Endothelial cell of umbilical vein (primary cell): ENCODE measurements at regions of chr7 and their contacts with region 1.

Region 1: DNA sequence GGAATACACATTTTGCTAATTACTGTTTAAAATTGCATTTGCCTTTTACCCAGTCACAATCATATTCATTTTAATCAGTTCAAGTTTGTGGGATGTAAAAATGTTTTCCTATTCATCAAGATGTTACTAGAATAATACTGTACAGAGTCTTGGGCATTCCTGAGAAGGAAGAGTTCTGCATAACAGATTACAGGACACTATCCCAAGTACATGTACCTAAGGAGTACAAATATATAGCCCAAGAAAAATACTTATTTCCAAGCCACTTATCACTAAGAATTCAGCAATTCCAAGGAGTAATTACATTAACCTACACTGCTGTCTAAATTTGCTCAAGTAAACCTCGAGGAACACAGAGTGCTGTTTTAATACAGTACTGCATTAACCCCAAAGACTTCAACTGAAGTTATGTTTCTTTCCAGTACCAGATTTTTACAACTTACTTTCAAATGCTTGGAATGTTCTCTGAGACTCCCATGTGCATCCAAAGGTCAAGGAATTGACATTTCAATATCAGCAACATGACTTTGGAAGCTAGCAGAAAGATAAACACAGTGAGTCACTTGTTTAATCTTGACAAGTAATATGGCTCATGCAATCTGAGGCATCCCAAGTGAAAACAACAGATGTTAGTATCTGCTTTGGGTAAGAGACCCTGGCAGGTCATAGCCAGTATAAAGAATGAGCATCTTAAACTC is 125.4 kb upstream of the BET1 start:
- DNase-seq: peak; percentile 84
- H3K4me3 ChIP-seq: no peak overlapping the region
- H3K27ac ChIP-seq: peak overlapping the region; percentile 57
- H3K4me1 ChIP-seq: peaks cover 16% of the 10 kb centered on the region
- H3K27me3 ChIP-seq: no peaks in the 10 kb centered on the region
- CTCF ChIP-seq: no peak
- POLR2A ChIP-seq: no peak

Region 2: DNA sequence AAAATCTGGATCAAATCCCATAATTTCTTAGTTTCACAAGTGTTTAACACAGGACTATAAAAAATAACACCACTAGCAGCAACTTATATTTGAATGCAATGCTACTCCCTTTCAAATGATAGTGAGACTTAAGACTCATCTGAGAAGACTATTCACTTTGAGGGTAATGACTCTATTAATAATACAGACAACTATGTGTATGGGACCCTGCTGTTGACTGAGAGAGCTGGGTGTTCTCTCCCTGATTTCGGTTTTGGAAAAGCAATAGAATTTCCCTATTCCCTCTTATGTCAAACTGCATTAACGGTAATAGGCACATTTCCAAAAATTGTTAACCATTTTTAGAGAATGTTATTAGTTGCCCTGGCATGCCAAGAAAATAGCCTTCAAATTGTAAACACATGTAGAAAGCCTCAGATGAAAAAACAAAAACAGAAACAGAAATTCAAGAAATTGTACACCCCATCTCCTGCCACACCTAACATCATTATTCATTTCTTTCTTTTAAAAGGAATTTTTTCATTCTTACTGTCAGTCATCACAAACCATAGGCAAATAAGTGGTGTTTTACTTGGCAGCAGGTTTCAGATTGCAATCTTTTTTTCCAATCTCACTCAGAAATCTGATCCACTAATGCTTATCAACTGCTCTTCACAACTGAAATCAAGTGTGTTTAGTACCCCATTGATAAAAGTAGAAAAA is 392.8 kb before region 1 on chr7:
- CTCF ChIA-PET with region 1: no interaction called
- POLR2A ChIA-PET with region 1: no interaction called
- dilution Hi-C with region 1: no loop called
- intact Hi-C with region 1: no loop called
- DNase-seq: no peak
- H3K4me3 ChIP-seq: no peak overlapping the region
- H3K27ac ChIP-seq: no peak overlapping the region
- H3K4me1 ChIP-seq: no peaks in the 10 kb centered on the region
- H3K27me3 ChIP-seq: peaks cover 0 to 6% of the 10 kb centered on the region in 2 experiments
- CTCF ChIP-seq: no peak
- POLR2A ChIP-seq: no peak

Region 3: DNA sequence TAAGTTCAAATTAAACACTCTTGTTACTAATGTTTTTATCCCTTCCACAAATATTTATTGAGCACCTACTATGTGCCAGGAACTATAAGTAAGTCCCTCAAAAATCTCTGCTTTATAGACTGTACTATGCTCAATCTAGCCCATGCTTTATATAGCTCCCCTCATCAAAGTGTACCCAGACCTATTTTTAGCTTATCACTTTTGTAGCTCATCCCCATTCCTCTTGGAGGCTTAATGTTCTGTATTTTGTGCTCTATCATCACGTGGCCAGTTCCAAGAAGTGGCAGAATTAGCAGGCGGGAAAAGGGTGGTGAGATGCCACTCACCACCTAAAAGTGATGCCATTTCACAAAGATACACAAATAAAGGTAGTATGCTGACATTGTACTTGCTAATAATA is 12.7 kb after region 1 on chr7:
- CTCF ChIA-PET with region 1: interaction called, 10 read pairs
- POLR2A ChIA-PET with region 1: no interaction called
- dilution Hi-C with region 1: no loop called
- intact Hi-C with region 1: no loop called
- DNase-seq: no peak
- H3K4me3 ChIP-seq: no peak overlapping the region
- H3K27ac ChIP-seq: no peak overlapping the region
- H3K4me1 ChIP-seq: peaks cover 6% of the 10 kb centered on the region
- H3K27me3 ChIP-seq: no peaks in the 10 kb centered on the region
- CTCF ChIP-seq: no peak
- POLR2A ChIP-seq: no peak